ENCODE measurements at regions of chr4 and their contacts with region 1.

Region 1: GRCh38 chr4:174764105-174764729 is 64.8 kb downstream of the GLRA3 start:
- DNase-seq: peak; percentile 25
- ATAC-seq: no peak
- H3K4me3 ChIP-seq: no peak overlapping the region
- H3K4me3 Mint-ChIP-seq: no peak overlapping the region
- H3K27ac ChIP-seq: no peak overlapping the region
- H3K27ac Mint-ChIP-seq: no peak overlapping the region
- H3K4me1 ChIP-seq: no peaks in the 10 kb centered on the region
- H3K4me1 Mint-ChIP-seq: no peaks in the 10 kb centered on the region
- H3K27me3 ChIP-seq: no peaks in the 10 kb centered on the region
- H3K27me3 Mint-ChIP-seq: no peaks in the 10 kb centered on the region
- CTCF ChIP-seq: peak; percentile 55

Region 2: DNA sequence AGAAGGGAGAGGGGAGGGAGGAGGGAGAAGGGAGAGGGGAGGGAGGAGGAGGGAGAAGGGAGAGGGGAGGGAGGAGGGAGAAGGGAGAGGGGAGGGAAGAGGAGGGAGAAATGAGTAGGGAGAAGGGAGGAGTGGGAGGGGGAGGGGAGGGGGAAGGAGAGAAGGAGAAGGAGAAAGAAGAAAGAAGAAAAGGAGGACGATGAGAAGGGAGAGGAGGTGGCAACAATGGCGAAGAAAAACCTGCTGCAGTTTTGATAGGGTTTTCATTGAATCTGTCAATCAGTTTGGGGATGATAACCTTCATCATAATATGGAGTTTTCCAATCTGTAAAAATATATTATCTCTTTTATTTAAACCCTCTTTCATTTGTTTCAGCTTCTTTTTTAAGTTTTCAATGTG is 339.2 kb after region 1 on chr4:
- CTCF ChIA-PET with region 1: no interaction called
- POLR2A ChIA-PET with region 1: no interaction called
- intact Hi-C with region 1: no loop called
- DNase-seq: no peak
- ATAC-seq: no peak
- H3K4me3 ChIP-seq: no peak overlapping the region
- H3K4me3 Mint-ChIP-seq: no peak overlapping the region
- H3K27ac ChIP-seq: no peak overlapping the region
- H3K27ac Mint-ChIP-seq: no peak overlapping the region
- H3K4me1 ChIP-seq: no peaks in the 10 kb centered on the region
- H3K4me1 Mint-ChIP-seq: no peaks in the 10 kb centered on the region
- H3K27me3 ChIP-seq: no peaks in the 10 kb centered on the region
- H3K27me3 Mint-ChIP-seq: no peaks in the 10 kb centered on the region
- CTCF ChIP-seq: no peak

Region 3: GRCh38 chr4:175536852-175537453 is 772.7 kb after region 1 on chr4:
- CTCF ChIA-PET with region 1: interaction called, 19 read pairs
- POLR2A ChIA-PET with region 1: no interaction called
- intact Hi-C with region 1: loop called (anchors 5 kb)
- DNase-seq: peak; percentile 35
- ATAC-seq: no peak
- H3K4me3 ChIP-seq: no peak overlapping the region
- H3K4me3 Mint-ChIP-seq: no peak overlapping the region
- H3K27ac ChIP-seq: no peak overlapping the region
- H3K27ac Mint-ChIP-seq: no peak overlapping the region
- H3K4me1 ChIP-seq: no peaks in the 10 kb centered on the region
- H3K4me1 Mint-ChIP-seq: peaks cover 2% of the 10 kb centered on the region
- H3K27me3 ChIP-seq: no peaks in the 10 kb centered on the region
- H3K27me3 Mint-ChIP-seq: no peaks in the 10 kb centered on the region
- CTCF ChIP-seq: peak; percentile 53

Measured in B cell (primary cell).